Activated naive CD4-positive, alpha-beta T cell treated with anti-CD3 and anti-CD28 coated beads for 36 hours (primary cell): ENCODE measurements at regions of chr11 and their contacts with region 1.

Region 1: GRCh38 chr11:66069715-66070603 is at the start of gene PACS1:
- DNase-seq: peak; percentile 81
- H3K4me3 Mint-ChIP-seq: peak within 1 kb of the TSS; percentile 89
- H3K27ac Mint-ChIP-seq: peak within 1 kb of the TSS; percentile 97
- H3K4me1 Mint-ChIP-seq: peaks cover 62% of the 10 kb centered on the region
- H3K27me3 Mint-ChIP-seq: no peaks in the 10 kb centered on the region
- total RNA-seq, gene PACS1: 77.8 to 80.7 TPM

Region 2: DNA sequence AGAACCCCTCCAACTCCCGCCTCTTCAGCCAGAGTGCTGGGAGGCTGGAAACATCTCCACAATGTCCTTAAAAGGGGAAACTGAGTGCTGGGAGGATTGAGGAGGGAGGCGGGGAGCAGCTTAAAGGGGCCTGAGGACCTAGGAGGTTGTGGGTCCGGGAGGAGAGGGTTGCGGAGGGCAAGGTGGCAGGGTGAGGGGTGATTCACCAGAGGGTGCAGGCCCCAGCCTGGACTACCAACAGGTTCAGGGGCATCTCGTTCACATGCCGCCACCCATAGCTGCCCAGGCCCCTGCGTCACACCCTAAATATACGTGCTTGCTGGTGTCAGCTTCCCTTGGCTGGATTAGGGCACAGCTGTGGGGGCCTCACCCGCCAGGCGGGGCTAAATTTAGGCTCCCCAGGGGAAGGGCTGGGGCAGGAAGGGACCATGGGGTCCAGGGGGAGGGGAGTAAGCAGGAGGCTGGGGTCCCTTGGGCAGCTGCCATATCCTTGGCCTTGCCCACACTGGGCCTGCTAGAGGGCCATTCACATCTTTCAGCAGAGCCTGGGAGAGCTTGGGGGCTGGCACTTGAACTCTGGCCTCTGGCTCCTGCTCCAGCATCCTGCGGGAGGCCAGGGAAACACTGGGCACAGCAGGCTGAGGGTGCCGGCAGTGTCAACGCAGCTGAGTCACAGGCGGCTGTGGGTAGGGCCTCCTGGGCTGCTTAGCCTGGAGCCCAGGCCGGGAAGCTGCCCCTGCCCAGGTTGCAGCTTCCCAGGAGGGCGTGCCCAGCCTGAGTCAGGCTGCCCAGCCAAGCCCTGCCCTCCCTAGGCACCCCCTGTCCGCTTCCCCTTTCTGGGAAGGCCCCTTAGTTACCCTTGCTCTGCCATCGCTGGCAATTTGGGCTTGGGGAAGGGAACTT is 492.8 kb before region 1 on chr11:
- CTCF ChIA-PET with region 1: no interaction called
- intact Hi-C with region 1: no loop called
- DNase-seq: peak; percentile 64
- H3K4me3 Mint-ChIP-seq: peak overlapping the region; percentile 83
- H3K27ac Mint-ChIP-seq: peak overlapping the region; percentile 77
- H3K4me1 Mint-ChIP-seq: peaks cover 43% of the 10 kb centered on the region
- H3K27me3 Mint-ChIP-seq: no peaks in the 10 kb centered on the region

Region 3: DNA sequence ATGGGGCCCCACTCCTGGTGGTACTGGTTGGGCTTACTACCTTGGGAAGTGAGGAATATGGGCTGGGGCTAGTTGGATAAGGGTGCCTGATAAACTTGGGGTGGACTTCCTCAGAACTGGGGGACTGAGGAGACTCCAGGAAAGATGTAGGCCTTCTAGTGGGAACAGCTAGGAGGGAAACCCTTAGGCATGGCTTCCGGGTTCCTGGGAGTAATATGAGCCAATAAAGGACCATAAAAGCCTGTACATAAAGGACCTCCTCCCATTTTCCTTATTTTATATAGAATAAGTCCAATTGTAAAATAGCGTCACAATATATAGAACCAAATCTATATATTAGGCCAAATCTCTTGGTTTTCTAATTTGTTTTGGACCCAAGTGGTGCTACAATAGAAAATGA is 330.9 kb before region 1 on chr11:
- CTCF ChIA-PET with region 1: no interaction called
- intact Hi-C with region 1: no loop called
- DNase-seq: no peak
- H3K4me3 Mint-ChIP-seq: no peak overlapping the region
- H3K27ac Mint-ChIP-seq: no peak overlapping the region
- H3K4me1 Mint-ChIP-seq: no peaks in the 10 kb centered on the region
- H3K27me3 Mint-ChIP-seq: peaks cover 2% of the 10 kb centered on the region

Region 4: DNA sequence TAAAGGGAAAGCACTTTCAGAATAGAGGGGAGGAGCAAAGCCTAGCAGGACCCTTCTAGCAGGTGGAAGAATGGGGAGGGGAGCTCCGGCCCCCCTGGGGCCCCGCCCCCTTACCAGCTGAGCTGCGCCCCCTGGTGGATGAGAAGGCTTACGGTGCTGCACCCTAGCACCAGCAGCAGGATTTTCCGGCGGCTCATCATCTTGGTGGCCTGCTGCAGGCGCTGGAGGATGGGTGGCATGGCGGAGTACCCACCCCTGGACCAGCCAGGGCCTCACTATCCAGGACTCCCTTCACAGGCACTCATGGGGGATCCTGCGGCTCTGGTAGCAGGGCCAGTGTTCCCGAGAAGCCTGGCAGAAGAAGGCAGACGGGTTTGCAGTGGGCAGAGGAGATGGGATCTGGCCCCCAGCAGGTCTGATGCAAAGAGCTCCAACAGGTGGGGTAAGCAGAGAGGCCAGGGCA is 24.8 kb before region 1 on chr11:
- CTCF ChIA-PET with region 1: interaction called, 58 read pairs
- intact Hi-C with region 1: no loop called
- DNase-seq: peak; percentile 88
- H3K4me3 Mint-ChIP-seq: peak overlapping the region; percentile 12
- H3K27ac Mint-ChIP-seq: peak overlapping the region; percentile 42
- H3K4me1 Mint-ChIP-seq: peaks cover 19% of the 10 kb centered on the region
- H3K27me3 Mint-ChIP-seq: peaks cover 7% of the 10 kb centered on the region

Region 5: GRCh38 chr11:66081505-66081904 is 11.5 kb after region 1 on chr11:
- CTCF ChIA-PET with region 1: interaction called, 61 read pairs
- intact Hi-C with region 1: loop called (anchors 1 kb)
- DNase-seq: peak; percentile 91
- H3K4me3 Mint-ChIP-seq: peak overlapping the region; percentile 78
- H3K27ac Mint-ChIP-seq: peak overlapping the region; percentile 98
- H3K4me1 Mint-ChIP-seq: peaks cover 92% of the 10 kb centered on the region
- H3K27me3 Mint-ChIP-seq: no peaks in the 10 kb centered on the region

Region 6: DNA sequence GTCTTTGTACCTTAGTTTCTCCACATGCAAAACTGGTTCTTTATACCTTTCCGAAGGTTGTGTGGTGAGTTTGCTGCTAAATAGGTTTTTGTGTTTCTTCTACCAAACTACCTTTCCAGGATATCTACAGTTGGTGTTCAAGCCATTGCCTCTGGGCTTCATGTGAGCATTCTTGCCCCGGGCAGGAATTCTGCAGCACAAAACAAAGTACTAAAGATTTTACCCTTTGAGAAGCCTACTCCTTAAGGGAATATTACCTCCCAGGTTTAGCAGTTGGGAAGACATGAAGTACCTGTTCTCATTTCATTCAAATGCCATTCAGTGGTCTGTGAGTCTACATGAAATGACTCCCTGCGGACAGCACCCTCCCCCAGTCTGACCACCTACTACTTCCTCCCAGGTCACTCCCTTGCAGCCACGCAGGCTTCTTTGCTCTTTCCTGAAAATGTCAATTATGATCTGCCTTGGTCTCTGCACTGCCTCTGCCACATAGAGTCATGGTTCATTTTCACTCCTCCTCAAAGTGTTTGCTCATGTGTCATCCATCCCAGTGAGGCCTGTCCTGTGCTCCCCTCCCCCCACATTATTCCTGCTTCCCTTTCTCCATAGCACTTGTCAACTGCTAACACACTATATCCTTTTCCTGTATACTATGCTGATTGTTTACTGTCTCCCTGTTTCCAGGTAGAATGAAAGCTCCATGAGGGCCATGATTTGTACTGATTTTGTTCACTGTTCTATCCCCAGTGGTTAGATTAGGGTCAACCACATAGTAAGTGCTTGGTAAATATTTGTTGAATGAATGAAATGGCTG is 37.0 kb after region 1 on chr11:
- CTCF ChIA-PET with region 1: interaction called, 13 read pairs
- intact Hi-C with region 1: no loop called
- DNase-seq: peak; percentile 47
- H3K4me3 Mint-ChIP-seq: no peak overlapping the region
- H3K27ac Mint-ChIP-seq: peak overlapping the region; percentile 87
- H3K4me1 Mint-ChIP-seq: peaks cover 87% of the 10 kb centered on the region
- H3K27me3 Mint-ChIP-seq: no peaks in the 10 kb centered on the region

Region 7: DNA sequence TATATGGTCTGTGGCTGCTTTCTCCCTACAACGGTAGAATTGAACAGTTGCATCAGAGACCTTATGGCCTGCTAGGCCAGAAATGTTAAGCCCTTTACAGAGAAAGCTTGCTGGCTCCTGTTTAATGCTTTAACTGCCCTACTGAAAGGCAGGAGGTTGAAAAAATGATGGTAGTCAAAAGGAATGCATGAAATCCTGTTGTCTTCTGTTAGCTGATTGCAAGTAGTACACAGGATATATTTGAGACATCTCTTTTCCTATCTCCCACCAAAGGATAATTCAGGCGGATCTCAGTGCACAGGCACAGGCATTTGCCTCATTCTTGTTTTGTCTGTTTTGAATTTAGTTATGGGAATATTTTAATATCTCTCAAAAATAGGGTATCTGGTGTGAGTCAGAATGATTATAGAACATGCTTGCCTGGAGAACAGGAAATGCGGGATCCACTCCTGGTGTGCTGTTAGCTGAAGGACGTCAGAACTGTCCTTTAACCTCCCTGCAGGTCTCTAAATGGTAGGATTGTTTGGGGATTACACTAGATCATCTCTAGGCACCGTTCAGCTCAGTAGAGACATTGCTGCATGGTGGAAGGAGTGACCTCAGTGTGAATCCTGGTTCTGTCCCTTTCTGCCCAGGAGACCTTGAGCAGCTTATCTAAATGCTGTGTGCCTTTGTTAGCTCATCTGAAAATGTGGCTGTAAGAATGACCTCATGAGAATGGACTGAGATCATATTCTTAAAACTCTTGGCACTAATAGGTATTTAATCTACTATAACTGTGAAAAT is 49.6 kb after region 1 on chr11:
- CTCF ChIA-PET with region 1: interaction called, 12 read pairs
- intact Hi-C with region 1: no loop called
- DNase-seq: no peak
- H3K4me3 Mint-ChIP-seq: no peak overlapping the region
- H3K27ac Mint-ChIP-seq: peak overlapping the region; percentile 1
- H3K4me1 Mint-ChIP-seq: peaks cover 83% of the 10 kb centered on the region
- H3K27me3 Mint-ChIP-seq: no peaks in the 10 kb centered on the region

Region 8: GRCh38 chr11:66136752-66137123 is 66.8 kb after region 1 on chr11:
- CTCF ChIA-PET with region 1: interaction called, 24 read pairs
- intact Hi-C with region 1: loop called (anchors 1 kb)
- DNase-seq: peak; percentile 47
- H3K4me3 Mint-ChIP-seq: no peak overlapping the region
- H3K27ac Mint-ChIP-seq: peak overlapping the region; percentile 66
- H3K4me1 Mint-ChIP-seq: peaks cover 66% of the 10 kb centered on the region
- H3K27me3 Mint-ChIP-seq: no peaks in the 10 kb centered on the region